Dendritic cell treated with granulocyte-macrophage colony-stimulating factor and Interleukin-4, amounts not matched to agents 40 ng/mL and 50 ng/mL, for 4 days (primary cell): ENCODE measurements at regions of chr3 and their contacts with region 1.

Region 1: DNA sequence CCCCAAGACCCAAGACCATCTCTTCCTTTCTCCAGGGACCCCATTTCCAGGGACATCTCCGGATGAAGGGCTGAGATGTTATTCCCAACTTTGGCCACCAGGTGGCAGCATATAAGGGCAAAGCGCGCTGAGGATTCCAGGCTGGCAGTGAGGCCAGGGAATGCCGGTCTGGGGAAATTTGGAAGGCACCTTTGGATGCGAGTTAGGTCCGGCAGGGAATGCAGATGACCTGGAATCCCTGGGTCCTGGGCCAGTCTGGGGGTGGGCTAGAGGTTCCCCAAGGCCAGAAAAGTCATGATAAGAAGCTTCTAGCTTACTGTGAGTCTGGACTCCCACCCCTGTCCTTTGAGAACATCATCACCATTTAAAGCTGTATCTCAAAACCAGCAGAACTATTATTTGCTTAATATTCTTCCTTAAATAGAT is 1.6 kb upstream of the CHST13 start:
- H3K4me3 Mint-ChIP-seq: no peak overlapping the region
- H3K27ac Mint-ChIP-seq: peak overlapping the region; percentile 0
- H3K4me1 Mint-ChIP-seq: peaks cover 50% of the 10 kb centered on the region
- H3K27me3 Mint-ChIP-seq: peaks cover 3% of the 10 kb centered on the region

Region 2: GRCh38 chr3:126180477-126181397 is 341.6 kb before region 1 on chr3 and contains the start of gene ALDH1L1:
- intact Hi-C with region 1: no loop called
- H3K4me3 Mint-ChIP-seq: no peak within 1 kb of the TSS
- H3K27ac Mint-ChIP-seq: no peak within 1 kb of the TSS
- H3K4me1 Mint-ChIP-seq: peaks cover 5% of the 10 kb centered on the region
- H3K27me3 Mint-ChIP-seq: peaks cover 49% of the 10 kb centered on the region

Region 3: DNA sequence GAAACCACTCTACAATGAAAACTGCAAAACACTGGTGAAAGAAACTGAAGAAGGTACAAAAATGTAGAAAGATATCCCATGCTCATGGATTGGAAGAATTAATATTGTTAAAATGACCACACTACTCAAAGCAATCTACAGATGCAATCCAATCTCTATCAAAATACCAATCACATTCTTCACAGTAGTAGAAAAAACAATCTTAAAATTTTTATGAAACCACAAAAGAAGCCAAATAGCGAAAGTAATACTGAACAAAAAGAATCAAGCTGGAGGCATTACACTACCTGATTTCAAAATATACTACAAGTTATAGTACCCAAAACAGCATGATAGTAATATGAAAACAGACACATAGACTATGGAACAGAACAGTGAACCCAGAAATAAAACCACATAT is 95.6 kb after region 1 on chr3:
- intact Hi-C with region 1: loop called (anchors 5 kb)
- H3K4me3 Mint-ChIP-seq: no peak overlapping the region
- H3K27ac Mint-ChIP-seq: no peak overlapping the region
- H3K4me1 Mint-ChIP-seq: peaks cover 48% of the 10 kb centered on the region
- H3K27me3 Mint-ChIP-seq: no peaks in the 10 kb centered on the region

Region 4: DNA sequence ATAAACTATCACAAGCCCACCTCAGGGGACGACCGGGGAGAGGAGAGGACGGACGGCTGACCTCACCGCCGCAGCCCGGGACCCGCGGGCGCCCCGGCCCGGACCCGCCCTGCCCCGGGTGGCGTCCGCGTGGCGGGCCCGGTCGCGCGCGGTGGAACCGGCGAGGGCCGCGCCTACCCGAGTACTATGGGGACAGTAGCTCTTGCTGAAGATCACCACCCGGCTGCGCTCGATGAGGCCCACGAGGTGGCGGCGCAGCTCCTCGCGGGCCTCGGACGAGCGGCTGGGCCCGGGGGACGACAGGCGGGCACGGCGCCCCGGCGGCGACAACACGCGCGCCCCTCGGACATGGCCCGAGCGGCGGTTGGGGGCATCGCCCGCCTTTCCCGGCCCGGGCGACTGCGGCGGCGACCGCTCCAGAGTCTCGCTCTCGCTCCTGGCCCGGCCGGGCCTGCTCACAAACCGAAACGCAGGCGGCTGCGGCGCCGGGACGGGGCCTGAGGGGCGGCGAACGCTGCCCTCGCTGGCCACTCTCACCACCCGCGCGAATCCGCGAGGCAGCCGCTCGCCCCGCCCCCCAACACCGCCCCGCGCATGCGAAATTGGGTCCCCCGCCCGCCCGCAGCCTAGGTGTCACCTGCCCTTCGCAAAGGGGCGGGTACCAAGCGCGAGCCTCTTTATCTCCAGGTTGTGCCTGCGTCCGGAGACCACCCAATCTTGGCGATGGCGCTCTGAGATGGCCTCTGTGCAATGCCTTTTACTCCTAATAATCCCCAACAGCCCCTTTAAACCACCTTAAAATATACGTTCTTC is 132.4 kb after region 1 on chr3 and contains the start of gene TXNRD3:
- intact Hi-C with region 1: loop called (anchors 5 kb)
- H3K4me3 Mint-ChIP-seq: peak within 1 kb of the TSS; percentile 80
- H3K27ac Mint-ChIP-seq: peak within 1 kb of the TSS; percentile 56
- H3K4me1 Mint-ChIP-seq: peaks cover 8% of the 10 kb centered on the region
- H3K27me3 Mint-ChIP-seq: peaks cover 27% of the 10 kb centered on the region

Region 5: GRCh38 chr3:126971891-126972351 is 449.5 kb after region 1 on chr3:
- intact Hi-C with region 1: loop called (anchors 10 kb)
- H3K4me3 Mint-ChIP-seq: no peak overlapping the region
- H3K27ac Mint-ChIP-seq: peak overlapping the region; percentile 87
- H3K4me1 Mint-ChIP-seq: peaks cover 56% of the 10 kb centered on the region
- H3K27me3 Mint-ChIP-seq: peaks cover 77% of the 10 kb centered on the region

Region 6: DNA sequence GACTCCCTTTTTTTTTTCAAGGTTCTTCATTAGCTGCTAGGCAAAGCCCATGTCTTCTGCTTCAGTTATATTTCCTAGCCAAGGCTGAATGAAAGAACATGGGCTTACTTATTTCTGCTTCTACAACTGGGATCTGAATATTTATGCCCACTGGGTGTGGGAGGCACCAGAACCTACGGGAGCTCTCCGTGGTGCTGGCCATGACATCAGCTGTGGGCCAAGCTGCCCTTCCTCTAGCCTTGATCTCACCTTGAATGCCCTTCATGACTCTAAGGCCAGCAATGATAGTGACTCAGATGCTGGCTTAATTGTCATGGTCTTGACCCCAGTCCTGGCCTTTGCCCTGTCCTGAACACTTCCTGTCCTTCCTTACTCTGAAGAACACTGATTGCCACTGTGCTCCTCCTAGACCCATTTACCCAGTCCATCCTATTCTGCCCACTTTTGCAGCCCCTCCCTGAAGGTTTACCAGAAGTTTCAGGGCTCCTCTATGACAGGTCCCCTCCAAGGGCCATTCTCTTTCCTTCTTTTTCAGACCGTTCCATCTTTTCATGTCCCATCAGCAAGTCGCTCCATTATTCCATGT is 798.3 kb after region 1 on chr3:
- intact Hi-C with region 1: no loop called
- H3K4me3 Mint-ChIP-seq: no peak overlapping the region
- H3K27ac Mint-ChIP-seq: no peak overlapping the region
- H3K4me1 Mint-ChIP-seq: peaks cover 24% of the 10 kb centered on the region
- H3K27me3 Mint-ChIP-seq: peaks cover 24% of the 10 kb centered on the region

Region 7: DNA sequence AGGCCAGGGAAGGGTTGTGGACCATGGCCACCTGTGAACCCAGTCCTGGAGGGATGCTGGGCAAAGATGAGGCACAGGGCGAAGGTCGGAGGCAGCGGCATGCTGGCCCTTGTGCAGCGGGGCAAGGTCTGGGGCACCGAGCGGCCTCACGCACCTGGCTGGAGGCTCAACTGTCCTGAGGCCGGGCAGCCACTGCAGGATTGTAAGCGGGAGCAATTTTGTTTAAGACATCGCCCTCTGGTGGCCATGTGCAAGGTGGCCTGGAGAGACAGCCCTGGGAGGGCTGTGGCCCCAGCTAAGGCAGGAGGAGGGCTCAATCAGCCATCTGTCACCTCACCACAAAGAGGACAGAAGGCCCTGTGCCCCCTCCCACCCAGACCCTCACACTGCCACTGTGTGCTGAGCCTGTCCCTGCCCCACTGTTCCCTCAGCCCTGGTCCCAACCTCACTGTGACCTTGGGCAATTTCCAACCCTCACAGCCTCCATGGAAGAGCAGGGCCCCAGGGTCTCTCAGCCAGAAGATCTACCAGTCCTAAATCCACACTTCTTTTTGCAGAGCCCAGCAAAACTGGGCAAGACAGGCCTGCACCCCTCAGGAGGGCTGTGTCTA is 1021.9 kb after region 1 on chr3:
- intact Hi-C with region 1: loop called (anchors 10 kb)
- H3K4me3 Mint-ChIP-seq: no peak overlapping the region
- H3K27ac Mint-ChIP-seq: no peak overlapping the region
- H3K4me1 Mint-ChIP-seq: peaks cover 17% of the 10 kb centered on the region
- H3K27me3 Mint-ChIP-seq: peaks cover 30% of the 10 kb centered on the region